ENCODE measurements at regions of chr7 and their contacts with region 1.

Region 1: GRCh38 chr7:105365541-105366534 is 22.9 kb downstream of the SRPK2 start:
- DNase-seq: no peak

Region 2: DNA sequence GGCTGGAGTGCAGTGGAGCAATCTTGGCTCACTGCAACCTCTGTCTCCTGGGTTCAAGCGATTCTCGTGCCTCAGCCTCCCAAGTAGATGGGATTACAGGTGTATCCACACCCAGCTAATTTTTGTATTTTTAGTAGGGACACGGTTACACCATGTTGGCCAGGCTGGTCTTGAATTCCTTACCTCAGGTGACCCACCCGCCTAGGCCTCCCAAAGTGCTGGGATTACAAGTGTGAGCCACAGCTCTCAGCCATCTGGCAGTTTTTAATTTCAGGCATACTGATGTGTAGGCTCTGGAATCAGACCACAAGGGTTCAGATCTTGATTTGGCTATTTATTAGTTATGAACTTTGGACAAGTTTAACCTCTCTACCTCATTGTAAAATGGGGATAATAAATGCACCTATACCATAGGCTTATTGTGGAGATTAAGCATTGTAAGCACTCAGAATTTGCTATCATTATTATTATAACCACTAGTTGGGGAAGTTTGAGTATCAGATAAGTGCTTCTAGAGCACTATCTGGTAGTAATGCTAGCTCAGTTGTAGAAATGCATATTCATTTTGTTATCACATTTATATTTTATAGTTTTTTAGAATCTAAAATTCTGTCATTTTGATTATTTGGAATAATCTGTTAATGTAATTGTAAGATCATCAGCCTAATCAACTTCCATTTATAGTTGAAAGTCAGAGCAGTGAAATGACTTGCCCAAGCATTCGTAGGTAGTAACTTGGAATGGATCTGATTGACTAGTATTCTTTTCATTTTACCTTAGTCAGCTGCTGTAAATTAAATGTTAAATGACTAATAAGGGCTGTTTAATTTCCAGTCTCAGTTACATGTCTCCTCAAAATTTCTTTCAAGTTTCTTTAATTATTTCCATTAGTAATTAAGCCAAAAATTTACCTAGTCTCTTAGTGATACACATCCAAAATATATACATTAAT is 329.3 kb before region 1 on chr7:
- intact Hi-C with region 1: loop called in 1 of 2 experiments (anchors 5 kb)
- DNase-seq: no peak

Region 3: GRCh38 chr7:105402221-105403095 is 36.6 kb after region 1 on chr7:
- intact Hi-C with region 1: no loop called
- DNase-seq: no peak

Measured in posterior vena cava (tissue), 2 donors.